Heart right ventricle (tissue), 16 donors: ENCODE measurements at regions of chr20 and their contacts with region 1.

Region 1: DNA sequence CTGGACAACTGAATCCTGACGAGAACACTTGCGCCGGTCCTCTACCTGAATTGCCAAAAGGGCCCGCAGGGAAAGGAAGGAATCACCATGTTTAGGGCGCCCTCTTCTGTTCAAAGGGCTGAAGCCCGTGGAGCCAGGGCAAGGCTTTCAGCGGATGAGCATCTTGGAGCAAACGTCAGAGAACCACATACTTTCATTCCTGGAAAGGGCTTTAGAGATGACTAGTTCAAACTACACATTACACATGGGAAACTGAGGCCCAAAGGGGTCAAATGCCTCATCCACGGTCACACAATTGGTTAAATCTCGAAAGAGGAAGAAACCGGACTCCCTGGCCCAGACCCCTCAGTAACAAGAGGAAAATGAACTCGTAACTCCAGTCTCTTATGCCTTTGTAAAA is 11.5 kb upstream of the ZNF133 start:
- DNase-seq: peak; percentile 34 to 46
- ATAC-seq: peak in 5 of 8 donors; percentile 61 to 80 (median 72)
- H3K4me3 ChIP-seq: no peak overlapping the region
- H3K27ac ChIP-seq: no peak overlapping the region
- H3K4me1 ChIP-seq: peaks cover 0 to 9% (median 0%) of the 10 kb centered on the region in 9 donors
- H3K27me3 ChIP-seq: peaks cover 0 to 65% (median 35%) of the 10 kb centered on the region in 7 donors
- CTCF ChIP-seq: peak; percentile 12 to 81 (median 68)

Region 2: DNA sequence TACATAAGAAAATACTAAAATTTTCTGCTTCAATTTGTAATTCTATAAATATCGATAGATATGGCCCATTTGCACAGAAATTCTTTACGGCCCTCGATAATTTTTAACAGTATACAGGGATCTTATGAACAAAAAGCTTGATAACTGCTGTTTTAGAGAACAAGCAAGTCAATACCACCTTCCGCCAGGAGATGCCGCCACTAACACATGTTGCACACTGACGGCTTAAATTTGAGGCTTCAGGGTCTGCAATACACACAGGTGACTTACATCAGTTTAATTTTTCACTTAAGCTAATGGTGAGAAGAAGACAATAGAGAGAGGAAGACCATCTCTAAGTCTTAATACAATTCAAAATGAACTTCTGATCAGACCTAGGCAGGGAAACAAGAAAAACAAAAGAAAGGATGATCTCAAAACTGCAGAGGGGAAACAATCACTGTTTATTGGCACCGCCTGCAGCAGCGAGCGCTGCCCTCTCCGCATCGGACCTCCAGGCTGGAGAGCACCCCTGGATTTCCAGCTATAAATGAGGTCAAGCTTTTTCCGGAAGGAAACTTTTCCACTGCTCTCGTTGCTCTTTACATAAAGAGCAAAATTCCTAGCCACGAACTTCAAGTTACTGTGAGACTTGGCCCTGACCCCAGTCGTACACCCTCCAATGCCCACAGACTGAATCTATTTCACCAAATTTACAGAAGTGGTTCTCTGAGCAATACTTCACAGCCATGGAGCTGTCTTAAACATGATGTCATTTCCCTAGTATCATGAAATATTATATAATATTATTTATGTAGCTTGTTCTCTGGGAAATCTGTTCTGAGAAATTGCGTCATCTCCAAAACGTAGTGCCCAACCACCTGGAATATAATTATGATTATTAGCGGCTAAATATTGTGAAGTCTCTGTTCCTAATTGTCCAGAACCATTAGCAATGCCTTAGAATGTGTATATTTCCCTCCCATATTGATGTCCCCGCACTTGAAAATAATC is 1474.6 kb before region 1 on chr20:
- intact Hi-C with region 1: loop called in 1 of 10 experiments (anchors 5 kb)
- DNase-seq: peak; percentile 29 to 35
- ATAC-seq: no peak
- H3K4me3 ChIP-seq: no peak overlapping the region
- H3K27ac ChIP-seq: no peak overlapping the region
- H3K4me1 ChIP-seq: no peaks in the 10 kb centered on the region
- H3K27me3 ChIP-seq: peaks cover 0 to 77% (median 48%) of the 10 kb centered on the region in 7 donors
- CTCF ChIP-seq: peak; percentile 63 to 87 (median 77)

Region 3: DNA sequence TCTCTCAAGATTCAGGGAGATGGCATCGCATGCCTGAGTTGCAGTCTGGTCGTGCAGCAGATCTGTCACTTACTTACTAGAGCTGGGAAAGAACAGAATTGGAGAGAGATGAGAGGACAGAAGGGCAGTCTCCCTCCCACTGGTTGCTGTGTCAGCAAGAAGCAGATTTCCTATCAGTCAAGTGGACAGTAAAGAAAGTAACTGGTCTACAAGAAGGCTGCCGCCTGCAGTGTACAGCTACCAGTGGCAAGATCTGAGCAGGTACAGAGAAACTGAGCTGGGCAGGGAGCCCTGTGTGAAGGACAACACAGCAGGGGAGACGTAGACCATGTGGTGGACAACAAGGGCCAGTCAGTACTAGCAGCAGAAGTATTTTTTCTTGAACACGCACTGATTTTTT is 1099.5 kb before region 1 on chr20:
- intact Hi-C with region 1: no loop called
- DNase-seq: no peak
- ATAC-seq: no peak
- H3K4me3 ChIP-seq: no peak overlapping the region
- H3K27ac ChIP-seq: no peak overlapping the region
- H3K4me1 ChIP-seq: no peaks in the 10 kb centered on the region
- H3K27me3 ChIP-seq: peaks cover 0 to 7% (median 0%) of the 10 kb centered on the region in 7 donors
- CTCF ChIP-seq: no peak

Region 4: DNA sequence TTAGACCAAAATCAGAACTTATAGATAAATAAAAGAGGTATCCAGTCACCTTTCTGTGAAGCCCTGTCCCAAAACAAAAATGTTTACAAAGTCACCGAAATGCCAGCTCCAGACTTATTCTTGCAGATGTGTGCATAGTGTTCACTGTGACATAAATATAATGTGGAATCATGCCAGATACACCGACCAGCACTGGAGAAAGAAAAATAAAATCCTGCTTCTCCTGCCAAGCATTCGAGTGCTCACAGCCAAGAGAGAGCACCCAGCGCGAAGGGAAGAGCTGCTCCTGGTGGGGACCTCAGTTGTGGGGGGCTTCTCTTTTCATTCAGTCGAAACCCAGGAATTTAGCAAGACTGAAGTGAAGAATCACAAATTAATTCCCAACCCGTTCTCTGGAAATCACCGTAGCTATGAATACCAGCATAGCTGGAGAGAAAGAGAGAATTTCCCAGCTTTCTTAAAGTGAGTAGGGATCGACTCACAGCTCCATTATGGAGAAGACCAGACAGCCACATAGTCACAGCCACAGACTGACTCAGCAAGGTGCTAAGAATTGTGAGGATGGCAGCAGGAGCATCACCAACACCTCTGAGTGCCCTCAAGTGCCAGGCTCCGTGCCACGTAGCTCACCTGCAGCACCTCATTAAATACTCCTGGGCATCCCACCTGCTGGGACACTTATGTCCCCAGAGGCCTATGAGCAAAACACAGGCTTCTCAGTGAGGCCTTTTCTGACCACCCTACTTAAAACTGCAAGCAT is 778.8 kb before region 1 on chr20:
- intact Hi-C with region 1: loop called in 7 of 10 experiments (anchors 10 kb)
- DNase-seq: no peak
- ATAC-seq: no peak
- H3K4me3 ChIP-seq: no peak overlapping the region
- H3K27ac ChIP-seq: no peak overlapping the region
- H3K4me1 ChIP-seq: peaks cover 0 to 5% (median 0%) of the 10 kb centered on the region in 9 donors
- H3K27me3 ChIP-seq: no peaks in the 10 kb centered on the region
- CTCF ChIP-seq: no peak

Region 5: DNA sequence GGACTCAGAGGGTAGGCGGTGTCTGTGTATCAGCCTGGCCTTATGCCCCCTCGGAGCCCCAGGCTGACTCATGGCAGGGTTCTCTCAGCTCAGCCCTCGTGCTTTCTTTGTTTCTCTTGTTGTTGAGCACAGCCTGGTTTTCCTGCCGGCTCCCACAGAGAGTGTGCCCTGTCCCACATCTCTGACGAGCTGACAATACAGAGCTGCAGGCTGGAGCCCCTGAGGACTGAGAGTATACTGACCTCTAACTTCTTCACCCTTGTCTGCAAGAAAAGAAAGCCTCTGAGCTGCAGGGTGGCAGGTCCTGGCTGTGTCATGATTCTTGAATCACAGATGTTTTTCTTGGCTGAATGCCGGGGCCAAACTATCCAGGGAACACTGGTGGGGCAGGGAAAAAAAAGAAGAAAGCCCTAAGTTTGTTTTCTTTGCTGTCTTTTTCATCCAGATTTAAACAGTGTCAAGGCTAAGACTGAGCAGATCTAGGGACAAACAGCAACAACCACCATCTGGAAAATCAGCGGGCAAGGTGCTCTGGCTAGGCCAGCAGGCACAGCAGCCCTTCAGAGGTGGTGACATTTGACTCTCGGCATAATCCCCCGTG is 51.8 kb before region 1 on chr20:
- intact Hi-C with region 1: loop called in 1 of 10 experiments (anchors 10 kb)
- DNase-seq: peak; percentile 20 to 24
- ATAC-seq: peak in 7 of 8 donors; percentile 33 to 82 (median 53)
- H3K4me3 ChIP-seq: no peak overlapping the region
- H3K27ac ChIP-seq: no peak overlapping the region
- H3K4me1 ChIP-seq: peaks cover 0 to 20% (median 11%) of the 10 kb centered on the region in 9 donors
- H3K27me3 ChIP-seq: peaks cover 0 to 7% (median 0%) of the 10 kb centered on the region in 7 donors
- CTCF ChIP-seq: no peak